Ascending aorta (tissue), 2 donors: ENCODE measurements at regions of chr2 and their contacts with region 1.

Region 1: GRCh38 chr2:41598161-41598894 is 449.5 kb upstream of the PKDCC start:
- DNase-seq: no peak
- H3K4me3 ChIP-seq: no peak overlapping the region
- H3K27ac ChIP-seq: peak overlapping the region; percentile 10 to 25
- H3K4me1 ChIP-seq: peaks cover 0 to 25% of the 10 kb centered on the region in 2 donors
- H3K27me3 ChIP-seq: no peaks in the 10 kb centered on the region
- CTCF ChIP-seq: no peak

Region 2: DNA sequence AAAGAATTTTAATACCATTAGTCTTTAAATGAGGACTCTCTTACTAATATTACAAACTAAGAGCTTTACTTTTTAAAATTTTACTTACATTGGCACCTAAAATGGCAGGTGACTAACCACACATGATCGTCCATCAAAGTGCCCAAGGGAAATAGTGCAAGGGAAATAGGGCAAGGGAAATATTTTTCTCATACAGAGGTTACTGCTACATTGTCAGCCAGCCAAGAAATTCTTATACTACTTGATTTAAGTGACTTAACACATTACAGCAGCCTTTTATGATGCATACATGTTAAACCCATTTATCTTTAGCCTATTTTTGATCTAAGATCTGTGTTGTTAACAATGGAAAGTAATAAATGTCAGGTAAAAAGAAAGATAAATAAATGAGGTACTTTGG is 137.7 kb before region 1 on chr2:
- intact Hi-C with region 1: loop called (anchors 10 kb)
- DNase-seq: no peak
- H3K4me3 ChIP-seq: no peak overlapping the region
- H3K27ac ChIP-seq: no peak overlapping the region
- H3K4me1 ChIP-seq: peaks cover 0 to 9% of the 10 kb centered on the region in 2 donors
- H3K27me3 ChIP-seq: no peaks in the 10 kb centered on the region
- CTCF ChIP-seq: no peak